ENCODE measurements at regions of chr21 and their contacts with region 1.

Region 1: GRCh38 chr21:44083631-44084291 is 23.4 kb upstream of the PWP2 start:
- DNase-seq: peak; percentile 46 to 94 (median 76)
- ATAC-seq: peak; percentile 76
- H3K4me3 ChIP-seq: peak overlapping the region; percentile 25 to 52
- H3K4me3 Mint-ChIP-seq: peak overlapping the region; percentile 74
- H3K27ac ChIP-seq: peak overlapping the region; percentile 73 to 78
- H3K27ac Mint-ChIP-seq: peak overlapping the region; percentile 95
- H3K4me1 ChIP-seq: peaks cover 85% of the 10 kb centered on the region
- H3K4me1 Mint-ChIP-seq: peaks cover 90% of the 10 kb centered on the region
- H3K27me3 ChIP-seq: no peaks in the 10 kb centered on the region
- H3K27me3 Mint-ChIP-seq: no peaks in the 10 kb centered on the region
- CTCF ChIP-seq: no peak

Region 2: GRCh38 chr21:44065428-44065827 is 18.3 kb before region 1 on chr21:
- CTCF ChIA-PET with region 1: interaction called, 7 read pairs
- POLR2A ChIA-PET with region 1: interaction called, 22 read pairs
- intact Hi-C with region 1: loop called (anchors 1 to 2 kb)
- DNase-seq: peak; percentile 57 to 98 (median 79)
- ATAC-seq: peak; percentile 88
- H3K4me3 ChIP-seq: peak overlapping the region in 1 of 2 experiments; percentile 5
- H3K4me3 Mint-ChIP-seq: peak overlapping the region; percentile 73
- H3K27ac ChIP-seq: peak overlapping the region; percentile 64 to 94
- H3K27ac Mint-ChIP-seq: peak overlapping the region; percentile 96
- H3K4me1 ChIP-seq: peaks cover 24% of the 10 kb centered on the region
- H3K4me1 Mint-ChIP-seq: peaks cover 49% of the 10 kb centered on the region
- H3K27me3 ChIP-seq: no peaks in the 10 kb centered on the region
- H3K27me3 Mint-ChIP-seq: no peaks in the 10 kb centered on the region
- CTCF ChIP-seq: no peak

Region 3: DNA sequence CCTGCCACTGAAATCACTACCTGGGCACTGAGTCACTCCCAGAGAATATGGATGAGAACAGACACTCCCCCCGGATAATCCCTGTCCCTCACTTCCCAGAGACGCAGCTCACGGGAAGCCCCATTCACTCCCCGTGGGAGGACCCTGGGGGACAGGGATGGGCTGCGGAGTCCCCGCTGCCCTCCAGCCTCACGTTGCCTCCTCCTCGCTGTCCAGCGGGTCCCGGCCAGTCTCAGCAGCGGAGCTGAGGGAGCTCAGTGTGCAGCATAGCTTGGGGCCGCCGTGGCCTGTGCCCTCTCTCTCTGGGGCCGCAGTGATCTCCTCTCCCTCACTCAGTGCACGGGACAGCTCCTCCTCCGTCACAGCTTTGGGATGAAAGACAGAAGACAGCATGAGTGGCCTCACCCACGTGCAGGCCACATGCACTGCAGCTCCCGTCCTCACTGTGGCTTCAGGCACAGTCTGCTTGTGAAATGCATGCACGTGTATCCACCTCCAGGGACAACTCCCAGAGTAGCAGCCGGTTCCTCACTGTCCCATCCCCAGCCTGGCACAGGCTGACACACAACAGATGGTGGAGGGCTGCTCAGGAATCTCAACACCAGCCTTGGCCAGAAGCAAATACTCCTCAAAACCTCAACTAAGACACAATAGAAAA is 248.0 kb after region 1 on chr21:
- CTCF ChIA-PET with region 1: no interaction called
- POLR2A ChIA-PET with region 1: no interaction called
- intact Hi-C with region 1: no loop called
- DNase-seq: no peak
- ATAC-seq: no peak
- H3K4me3 ChIP-seq: no peak overlapping the region
- H3K4me3 Mint-ChIP-seq: no peak overlapping the region
- H3K27ac ChIP-seq: no peak overlapping the region
- H3K27ac Mint-ChIP-seq: no peak overlapping the region
- H3K4me1 ChIP-seq: no peaks in the 10 kb centered on the region
- H3K4me1 Mint-ChIP-seq: no peaks in the 10 kb centered on the region
- H3K27me3 ChIP-seq: no peaks in the 10 kb centered on the region
- H3K27me3 Mint-ChIP-seq: no peaks in the 10 kb centered on the region
- CTCF ChIP-seq: no peak

Region 4: GRCh38 chr21:44487831-44488230 is 404.1 kb after region 1 on chr21:
- CTCF ChIA-PET with region 1: no interaction called
- POLR2A ChIA-PET with region 1: no interaction called
- intact Hi-C with region 1: no loop called
- DNase-seq: peak in 8 of 9 experiments; percentile 11 to 58 (median 47)
- ATAC-seq: no peak
- H3K4me3 ChIP-seq: no peak overlapping the region
- H3K4me3 Mint-ChIP-seq: no peak overlapping the region
- H3K27ac ChIP-seq: no peak overlapping the region
- H3K27ac Mint-ChIP-seq: no peak overlapping the region
- H3K4me1 ChIP-seq: peaks cover 7% of the 10 kb centered on the region
- H3K4me1 Mint-ChIP-seq: peaks cover 9% of the 10 kb centered on the region
- H3K27me3 ChIP-seq: no peaks in the 10 kb centered on the region
- H3K27me3 Mint-ChIP-seq: peaks cover 11% of the 10 kb centered on the region
- CTCF ChIP-seq: peak; percentile 39